HepG2 (cell line): ENCODE measurements at regions of chr15 and their contacts with region 1.

Region 1: DNA sequence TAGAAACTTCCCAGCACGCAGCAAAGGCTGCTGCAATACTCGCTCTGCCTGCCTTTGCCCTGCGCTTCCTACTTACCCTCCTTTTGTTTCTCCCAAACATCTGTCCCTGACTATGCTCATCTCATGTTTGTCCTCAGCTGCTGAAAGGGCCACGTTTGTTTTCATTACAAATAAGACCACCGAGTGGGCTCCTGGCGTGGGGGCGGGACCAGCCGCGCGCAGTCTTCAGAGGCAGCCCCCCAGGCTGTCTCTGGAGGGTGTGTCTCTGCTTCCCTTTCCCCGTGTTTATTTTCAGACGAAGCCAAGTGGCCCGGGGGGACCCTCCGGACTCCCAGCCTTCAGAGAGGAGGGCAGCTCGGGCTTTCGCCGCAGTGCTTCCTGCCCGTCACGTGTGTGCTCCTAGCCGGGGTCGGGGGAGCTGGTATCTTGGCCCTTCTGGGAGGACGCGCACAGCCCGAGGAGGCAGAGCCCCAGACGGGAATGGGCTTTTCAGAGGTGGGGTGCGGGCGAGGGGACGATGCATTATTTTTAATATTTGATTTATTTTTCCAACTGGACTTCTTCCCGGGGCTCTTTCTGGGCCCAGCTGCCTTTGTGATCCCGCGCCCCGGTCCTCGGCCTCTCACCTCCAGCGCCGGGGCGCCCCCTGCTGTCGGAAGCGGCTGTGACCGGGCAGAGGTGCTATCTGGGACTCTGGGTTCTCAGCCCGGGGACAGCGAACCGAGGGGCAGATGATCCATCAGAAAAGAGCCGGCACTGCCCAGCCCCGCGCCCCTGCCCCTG is 70.0 kb upstream of the CGNL1 start:
- DNase-seq: peak; percentile 38
- ATAC-seq: peak; percentile 87
- H3K4me3 ChIP-seq: peak overlapping the region in 2 of 3 experiments; percentile 39 to 46; a peak in 4 of 6 replicates
- H3K27ac ChIP-seq: no peak overlapping the region
- H3K4me1 ChIP-seq: peaks cover 37% of the 10 kb centered on the region
- H3K27me3 ChIP-seq: no peaks in the 10 kb centered on the region
- CTCF ChIP-seq: peak; percentile 83
- EP300 ChIP-seq: no peak
- POLR2A ChIP-seq: no peak
- RAD21 ChIP-seq: peak; percentile 75

Region 2: DNA sequence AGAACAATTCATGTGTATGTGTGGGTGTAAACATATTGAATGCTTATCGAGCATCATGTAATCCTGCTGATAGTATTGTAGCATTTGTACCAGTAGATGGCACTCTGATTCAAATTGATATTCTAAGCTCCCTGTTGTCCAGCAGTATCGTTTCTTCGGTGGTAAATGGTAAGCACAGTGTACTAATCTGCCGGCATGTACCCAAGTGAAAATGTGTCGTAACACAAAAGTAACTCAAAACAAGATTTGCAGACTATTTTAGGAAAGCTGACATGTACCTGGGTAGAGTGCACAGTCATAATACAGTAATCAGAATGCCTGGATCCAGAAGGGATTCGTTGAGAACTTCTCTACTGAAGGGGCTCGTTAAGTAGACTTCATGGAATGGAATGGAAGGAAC is 809.7 kb before region 1 on chr15:
- CTCF ChIA-PET with region 1: interaction called, 4 read pairs
- POLR2A ChIA-PET with region 1: no interaction called
- in situ Hi-C with region 1: loop called (anchors 10 kb)
- intact Hi-C with region 1: loop called (anchors 2 kb)
- DNase-seq: peak; percentile 60
- ATAC-seq: peak; percentile 90
- H3K4me3 ChIP-seq: peak overlapping the region in 2 of 3 experiments; percentile 8 to 20; a peak in 1 of 6 replicates
- H3K27ac ChIP-seq: no peak overlapping the region
- H3K4me1 ChIP-seq: peaks cover 5% of the 10 kb centered on the region
- H3K27me3 ChIP-seq: no peaks in the 10 kb centered on the region
- CTCF ChIP-seq: peak; percentile 84
- EP300 ChIP-seq: no peak
- POLR2A ChIP-seq: no peak
- RAD21 ChIP-seq: peak; percentile 56; the same call in 1 of the 2 replicates

Region 3: GRCh38 chr15:56821721-56822425 is 484.5 kb before region 1 on chr15:
- CTCF ChIA-PET with region 1: interaction called, 7 read pairs
- POLR2A ChIA-PET with region 1: no interaction called
- in situ Hi-C with region 1: loop called (anchors 10 kb)
- intact Hi-C with region 1: loop called (anchors 1 kb)
- DNase-seq: peak; percentile 43
- ATAC-seq: peak; percentile 93
- H3K4me3 ChIP-seq: no peak overlapping the region
- H3K27ac ChIP-seq: no peak overlapping the region
- H3K4me1 ChIP-seq: no peaks in the 10 kb centered on the region
- H3K27me3 ChIP-seq: no peaks in the 10 kb centered on the region
- CTCF ChIP-seq: peak; percentile 82
- EP300 ChIP-seq: no peak
- POLR2A ChIP-seq: no peak
- RAD21 ChIP-seq: peak; percentile 52; the same call in 1 of the 2 replicates

Region 4: DNA sequence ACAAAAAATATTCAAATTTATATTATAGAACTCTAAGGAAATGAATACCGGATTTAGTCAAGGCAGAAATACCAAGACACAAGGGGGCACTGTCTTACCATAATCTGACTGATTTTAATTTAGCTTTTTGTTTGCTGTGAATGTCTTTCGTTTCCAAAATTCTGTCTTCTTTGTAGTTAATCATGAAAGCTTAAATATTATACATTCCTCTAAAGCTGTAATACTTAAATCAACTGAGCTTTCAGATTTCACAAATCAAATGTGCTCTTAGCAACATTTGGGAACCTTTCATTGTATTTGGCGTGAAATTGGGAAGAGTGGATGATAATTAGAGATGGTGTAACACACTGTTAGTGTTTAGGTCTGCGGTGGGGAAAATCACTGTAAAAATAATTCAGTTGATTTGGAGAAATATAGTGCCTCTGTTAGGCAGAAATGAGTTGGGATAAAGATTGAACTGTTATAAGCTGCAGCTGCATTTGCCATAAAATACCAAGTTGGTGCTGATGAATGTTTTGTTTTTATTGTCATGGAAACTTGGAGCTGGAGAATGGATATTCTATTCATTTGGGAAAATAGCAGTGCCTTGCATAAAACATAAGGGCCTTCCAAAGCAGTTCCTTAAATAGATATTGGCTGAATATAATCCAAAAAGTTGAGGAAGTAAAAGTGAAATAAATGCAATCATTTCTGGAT is 159.7 kb before region 1 on chr15:
- CTCF ChIA-PET with region 1: interaction called, 4 read pairs
- POLR2A ChIA-PET with region 1: no interaction called
- in situ Hi-C with region 1: loop called (anchors 5 kb)
- intact Hi-C with region 1: loop called (anchors 2 kb)
- DNase-seq: peak; percentile 9
- ATAC-seq: no peak
- H3K4me3 ChIP-seq: no peak overlapping the region
- H3K27ac ChIP-seq: no peak overlapping the region
- H3K4me1 ChIP-seq: no peaks in the 10 kb centered on the region
- H3K27me3 ChIP-seq: no peaks in the 10 kb centered on the region
- CTCF ChIP-seq: peak; percentile 44
- EP300 ChIP-seq: no peak
- POLR2A ChIP-seq: no peak
- RAD21 ChIP-seq: no peak

Region 5: DNA sequence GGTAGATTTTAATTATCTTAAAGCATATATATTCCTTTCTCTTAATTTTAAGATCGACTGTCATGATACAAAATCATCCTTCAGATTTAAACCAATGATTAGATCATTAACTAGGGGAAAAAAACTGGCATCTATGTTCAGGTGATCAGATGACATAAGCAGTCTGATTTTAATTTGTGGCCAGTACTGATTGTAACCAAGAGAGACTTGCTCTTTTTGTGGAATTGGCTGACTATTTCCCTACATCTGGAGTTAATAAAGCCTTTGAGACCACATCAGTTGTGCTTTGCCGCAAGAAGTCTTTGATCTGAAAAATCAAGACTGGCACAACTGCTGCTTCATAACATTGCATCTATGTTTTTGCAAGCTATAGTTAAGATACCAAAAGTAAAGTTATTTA is 78.5 kb before region 1 on chr15:
- CTCF ChIA-PET with region 1: no interaction called
- POLR2A ChIA-PET with region 1: no interaction called
- in situ Hi-C with region 1: no loop called
- intact Hi-C with region 1: no loop called
- DNase-seq: no peak
- ATAC-seq: no peak
- H3K4me3 ChIP-seq: no peak overlapping the region
- H3K27ac ChIP-seq: no peak overlapping the region
- H3K4me1 ChIP-seq: no peaks in the 10 kb centered on the region
- H3K27me3 ChIP-seq: no peaks in the 10 kb centered on the region
- CTCF ChIP-seq: no peak
- EP300 ChIP-seq: no peak
- POLR2A ChIP-seq: no peak
- RAD21 ChIP-seq: no peak

Region 6: DNA sequence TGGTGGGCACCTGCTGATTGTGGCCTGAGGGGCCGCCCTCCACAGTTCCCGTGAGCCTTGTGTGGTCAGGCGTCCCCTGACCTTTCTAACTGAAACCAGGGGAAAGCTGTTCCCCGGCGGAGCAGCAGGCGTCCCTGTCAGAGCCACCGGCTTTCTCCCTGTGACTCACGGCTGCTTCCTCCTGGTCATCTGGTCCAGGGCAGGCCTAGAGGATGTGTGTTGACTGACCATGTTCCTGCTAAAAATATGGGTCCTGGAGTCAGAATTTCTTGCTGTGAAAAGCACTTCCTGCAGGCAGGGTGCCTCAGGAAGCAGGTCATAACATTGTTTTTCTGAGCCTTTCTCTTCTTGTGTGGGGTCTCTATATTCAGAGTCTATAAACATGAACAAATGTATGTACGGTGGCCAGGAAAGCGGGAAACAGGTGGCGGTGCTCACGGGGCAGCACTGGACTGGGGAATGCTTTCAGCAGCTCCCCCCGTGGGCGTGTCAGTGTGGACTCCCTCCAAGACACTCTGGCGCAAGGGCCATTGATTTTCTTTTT is 31.6 kb after region 1 on chr15:
- CTCF ChIA-PET with region 1: no interaction called
- POLR2A ChIA-PET with region 1: no interaction called
- in situ Hi-C with region 1: no loop called
- intact Hi-C with region 1: no loop called
- DNase-seq: peak; percentile 58
- ATAC-seq: peak; percentile 95
- H3K4me3 ChIP-seq: peak overlapping the region in 1 of 3 experiments; percentile 42; a peak in 1 of 6 replicates
- H3K27ac ChIP-seq: no peak overlapping the region
- H3K4me1 ChIP-seq: peaks cover 32% of the 10 kb centered on the region; the same call in 1 of the 2 replicates
- H3K27me3 ChIP-seq: peaks cover 3 to 34% of the 10 kb centered on the region in 2 experiments
- CTCF ChIP-seq: peak; percentile 70
- EP300 ChIP-seq: no peak
- POLR2A ChIP-seq: no peak
- RAD21 ChIP-seq: peak; percentile 56; the same call in 1 of the 2 replicates